IMR-90 (cell line): ENCODE measurements at regions of chr12 and their contacts with region 1.

Region 1: DNA sequence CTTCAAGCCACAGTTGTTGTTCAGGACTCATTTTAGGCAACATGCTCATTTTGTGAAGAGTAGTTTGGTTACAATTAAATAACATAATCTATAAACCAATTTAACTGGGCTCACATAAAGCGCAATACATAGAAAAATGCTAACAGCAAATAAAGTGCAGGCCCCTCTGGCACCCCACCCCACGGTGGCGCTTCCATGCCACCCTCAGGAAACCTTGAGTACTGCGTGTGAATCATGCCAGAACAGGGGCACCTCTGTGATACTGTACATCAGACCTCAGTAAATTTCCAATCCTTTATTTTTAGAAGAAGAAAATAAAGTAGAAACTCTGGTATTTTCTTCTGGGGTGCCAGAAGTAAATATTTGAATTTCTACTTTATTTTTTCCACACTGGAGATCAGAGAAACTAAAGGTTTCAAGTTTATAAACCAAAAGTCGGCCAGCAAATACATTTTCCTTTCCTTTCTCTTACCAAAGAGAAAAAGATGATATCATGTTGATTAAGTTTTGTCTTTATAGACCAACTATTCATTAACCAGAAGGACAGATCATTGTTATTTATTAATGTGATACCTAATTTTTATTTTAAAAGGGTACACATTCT is 316.8 kb downstream of the PAWR start:
- DNase-seq: peak; percentile 23
- ATAC-seq: peak; percentile 90
- H3K4me3 ChIP-seq: no peak overlapping the region
- H3K27ac ChIP-seq: no peak overlapping the region
- H3K4me1 ChIP-seq: no peaks in the 10 kb centered on the region
- H3K27me3 ChIP-seq: no peaks in the 10 kb centered on the region
- CTCF ChIP-seq: peak; percentile 74
- POLR2A ChIP-seq: no peak
- RAD21 ChIP-seq: peak; percentile 87

Region 2: GRCh38 chr12:78146365-78146772 is 1227.6 kb before region 1 on chr12:
- CTCF ChIA-PET with region 1: interaction called, 4 read pairs
- POLR2A ChIA-PET with region 1: no interaction called
- dilution Hi-C with region 1: no loop called
- in situ Hi-C with region 1: no loop called
- intact Hi-C with region 1: loop called (anchors 5 kb)
- DNase-seq: peak; percentile 62
- ATAC-seq: peak; percentile 70; the same call in 1 of the 2 replicates
- H3K4me3 ChIP-seq: no peak overlapping the region
- H3K27ac ChIP-seq: no peak overlapping the region
- H3K4me1 ChIP-seq: no peaks in the 10 kb centered on the region
- H3K27me3 ChIP-seq: no peaks in the 10 kb centered on the region
- CTCF ChIP-seq: peak; percentile 67
- POLR2A ChIP-seq: no peak
- RAD21 ChIP-seq: peak; percentile 58

Region 3: GRCh38 chr12:78181544-78182162 is 1192.3 kb before region 1 on chr12:
- CTCF ChIA-PET with region 1: no interaction called
- POLR2A ChIA-PET with region 1: no interaction called
- dilution Hi-C with region 1: no loop called
- in situ Hi-C with region 1: loop called (anchors 25 kb)
- intact Hi-C with region 1: loop called (anchors 10 kb)
- DNase-seq: peak; percentile 48
- ATAC-seq: peak; percentile 63
- H3K4me3 ChIP-seq: no peak overlapping the region
- H3K27ac ChIP-seq: no peak overlapping the region
- H3K4me1 ChIP-seq: peaks cover 6% of the 10 kb centered on the region; the same call in 1 of the 2 replicates
- H3K27me3 ChIP-seq: no peaks in the 10 kb centered on the region
- CTCF ChIP-seq: peak; percentile 68
- POLR2A ChIP-seq: no peak
- RAD21 ChIP-seq: peak; percentile 69

Region 4: DNA sequence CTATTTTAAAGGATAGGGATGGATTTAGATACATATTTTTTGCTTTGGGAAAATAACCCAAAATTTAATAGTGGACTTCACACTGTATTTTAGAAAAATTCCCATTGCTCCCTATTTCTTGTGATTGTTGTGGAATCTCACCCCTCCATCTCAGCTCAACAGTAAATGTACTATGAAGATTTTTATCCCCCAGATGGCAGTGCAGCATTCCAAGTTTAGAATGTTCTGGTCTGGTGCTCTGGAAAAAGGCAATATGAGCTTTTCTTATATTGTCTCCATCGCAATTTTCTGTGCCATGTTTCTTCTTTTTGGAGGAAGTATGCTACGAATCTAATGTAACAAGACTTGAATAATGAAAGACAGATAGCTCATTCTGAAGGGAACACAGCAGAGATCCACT is 981.1 kb before region 1 on chr12:
- CTCF ChIA-PET with region 1: no interaction called
- POLR2A ChIA-PET with region 1: no interaction called
- dilution Hi-C with region 1: no loop called
- in situ Hi-C with region 1: no loop called
- intact Hi-C with region 1: loop called (anchors 1 kb)
- DNase-seq: peak; percentile 30
- ATAC-seq: peak; percentile 63; the same call in 1 of the 2 replicates
- H3K4me3 ChIP-seq: no peak overlapping the region
- H3K27ac ChIP-seq: no peak overlapping the region
- H3K4me1 ChIP-seq: no peaks in the 10 kb centered on the region
- H3K27me3 ChIP-seq: no peaks in the 10 kb centered on the region; the same call in 1 of the 2 replicates
- CTCF ChIP-seq: peak; percentile 40
- POLR2A ChIP-seq: no peak
- RAD21 ChIP-seq: peak; percentile 53

Region 5: GRCh38 chr12:78470354-78471195 is 903.4 kb before region 1 on chr12:
- CTCF ChIA-PET with region 1: no interaction called
- POLR2A ChIA-PET with region 1: no interaction called
- dilution Hi-C with region 1: no loop called
- in situ Hi-C with region 1: no loop called
- intact Hi-C with region 1: loop called (anchors 1 kb)
- DNase-seq: peak; percentile 60
- ATAC-seq: peak; percentile 74
- H3K4me3 ChIP-seq: no peak overlapping the region
- H3K27ac ChIP-seq: no peak overlapping the region
- H3K4me1 ChIP-seq: no peaks in the 10 kb centered on the region
- H3K27me3 ChIP-seq: no peaks in the 10 kb centered on the region
- CTCF ChIP-seq: peak; percentile 70
- POLR2A ChIP-seq: no peak
- RAD21 ChIP-seq: peak; percentile 70

Region 6: GRCh38 chr12:79344855-79345847 is 28.8 kb before region 1 on chr12:
- CTCF ChIA-PET with region 1: interaction called, 11 read pairs
- POLR2A ChIA-PET with region 1: no interaction called
- dilution Hi-C with region 1: no loop called
- in situ Hi-C with region 1: no loop called
- intact Hi-C with region 1: no loop called
- DNase-seq: peak; percentile 50
- ATAC-seq: peak; percentile 86
- H3K4me3 ChIP-seq: no peak overlapping the region
- H3K27ac ChIP-seq: no peak overlapping the region
- H3K4me1 ChIP-seq: no peaks in the 10 kb centered on the region
- H3K27me3 ChIP-seq: no peaks in the 10 kb centered on the region; the same call in 1 of the 2 replicates
- CTCF ChIP-seq: peak; percentile 57
- POLR2A ChIP-seq: no peak
- RAD21 ChIP-seq: peak; percentile 78